ENCODE measurements at regions of chr7 and their contacts with region 1.

Region 1: GRCh38 chr7:133081599-133082389 is at the start of gene CHCHD3:
- DNase-seq: peak; percentile 99
- H3K4me3 ChIP-seq: peak within 1 kb of the TSS; percentile 81 to 96 (median 88)
- H3K27ac ChIP-seq: peak within 1 kb of the TSS; percentile 83 to 87 (median 84)
- H3K4me1 ChIP-seq: peaks cover 20 to 44% (median 34%) of the 10 kb centered on the region in 4 donors
- H3K27me3 ChIP-seq: no peaks in the 10 kb centered on the region
- CTCF ChIP-seq: peak in 1 of 3 experiments; percentile 10
- EP300 ChIP-seq: no peak
- POLR2A ChIP-seq: peak; percentile 46
- total RNA-seq, gene CHCHD3: 58.6 to 74.3 (median 68.9) TPM

Region 2: DNA sequence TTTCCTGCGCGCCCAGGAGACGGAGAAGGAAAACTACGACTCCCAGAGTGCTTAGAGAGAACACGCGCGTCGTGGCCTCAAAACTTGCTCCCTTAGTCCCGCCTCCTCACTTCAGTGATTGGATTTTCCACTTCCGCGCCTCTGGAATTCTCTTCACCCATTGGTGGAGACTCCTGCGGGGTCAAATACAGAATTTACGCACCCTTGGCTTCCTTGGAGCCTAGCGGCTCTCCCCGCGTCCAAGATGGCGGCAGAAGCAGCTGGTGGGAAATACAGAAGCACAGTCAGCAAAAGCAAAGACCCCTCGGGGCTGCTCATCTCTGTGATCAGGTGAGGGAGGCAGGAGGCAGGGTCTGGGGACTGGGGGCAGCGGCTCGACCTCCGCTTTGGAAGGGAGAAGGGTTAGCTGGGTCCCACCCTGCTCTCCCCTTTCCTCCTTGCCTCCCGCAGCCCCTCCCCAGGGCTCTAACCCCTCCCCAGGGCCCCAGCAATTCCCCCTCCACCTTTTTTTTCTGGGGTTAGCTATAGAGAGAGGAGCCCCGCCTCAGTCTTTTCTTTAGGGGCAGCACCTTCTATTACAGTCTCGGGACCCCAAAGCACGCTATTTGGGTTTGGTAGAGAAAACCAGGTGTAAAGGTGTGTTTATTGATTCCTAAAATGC is 171.2 kb after region 1 on chr7 and contains the start of gene EXOC4:
- intact Hi-C with region 1: loop called (anchors 5 kb)
- DNase-seq: peak; percentile 98
- H3K4me3 ChIP-seq: peak within 1 kb of the TSS; percentile 80 to 98 (median 88)
- H3K27ac ChIP-seq: peak within 1 kb of the TSS; percentile 85 to 87 (median 86)
- H3K4me1 ChIP-seq: peaks cover 10 to 24% (median 17%) of the 10 kb centered on the region in 4 donors
- H3K27me3 ChIP-seq: no peaks in the 10 kb centered on the region
- CTCF ChIP-seq: peak in 1 of 3 experiments; percentile 6
- EP300 ChIP-seq: no peak
- POLR2A ChIP-seq: no peak
- total RNA-seq, gene EXOC4: 36.6 to 64.0 (median 57.4) TPM

Measured in esophagus muscularis mucosa (tissue), 4 donors.